ENCODE measurements at regions of chr13 and their contacts with region 1.

Region 1: DNA sequence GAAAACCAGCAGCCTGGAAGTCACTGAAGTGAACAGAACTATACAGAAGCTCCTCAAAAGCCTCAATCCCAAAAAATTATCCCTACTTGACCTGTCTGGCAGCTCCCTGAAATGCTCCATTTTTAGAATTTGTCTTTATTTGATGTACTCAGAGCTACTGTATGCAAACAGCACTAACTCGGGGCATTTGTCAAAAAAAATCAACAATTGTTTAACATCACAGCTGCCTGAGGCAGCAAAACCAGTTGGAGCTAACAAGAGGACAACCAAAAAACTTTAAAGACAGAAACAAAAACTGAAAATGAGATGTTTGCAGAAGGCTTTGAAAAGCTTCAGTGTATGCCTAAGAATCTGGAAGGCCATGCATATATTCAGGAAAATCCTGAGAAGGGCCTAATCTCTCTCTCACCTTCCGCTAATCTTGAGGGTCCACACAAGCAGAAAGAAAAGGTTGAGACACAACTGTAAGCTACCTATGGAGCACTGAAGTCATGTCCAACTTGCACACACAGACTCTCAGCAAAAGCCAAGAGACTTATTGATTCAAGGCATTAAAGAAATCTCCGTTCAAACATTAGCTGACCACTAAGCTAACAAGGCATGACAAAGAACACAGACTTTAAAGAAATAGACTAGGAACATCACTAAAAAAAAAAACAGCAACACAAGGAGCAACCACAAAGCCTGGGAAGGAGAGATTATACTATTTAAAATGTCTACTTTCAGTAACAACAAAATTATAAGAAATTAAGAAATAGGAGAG is 16.1 kb downstream of the VWA8 start:
- DNase-seq: peak; percentile 80
- ATAC-seq: peak; percentile 87
- H3K4me3 ChIP-seq: no peak overlapping the region
- H3K27ac ChIP-seq: peak overlapping the region; percentile 10
- H3K4me1 ChIP-seq: peaks cover 20% of the 10 kb centered on the region
- H3K27me3 ChIP-seq: no peaks in the 10 kb centered on the region; a peak in 1 of 5 replicates
- CTCF ChIP-seq: no peak
- EP300 ChIP-seq: peak in 1 of 2 experiments; percentile 71; a peak in 2 of 4 replicates
- POLR2A ChIP-seq: no peak
- RAD21 ChIP-seq: no peak

Region 2: DNA sequence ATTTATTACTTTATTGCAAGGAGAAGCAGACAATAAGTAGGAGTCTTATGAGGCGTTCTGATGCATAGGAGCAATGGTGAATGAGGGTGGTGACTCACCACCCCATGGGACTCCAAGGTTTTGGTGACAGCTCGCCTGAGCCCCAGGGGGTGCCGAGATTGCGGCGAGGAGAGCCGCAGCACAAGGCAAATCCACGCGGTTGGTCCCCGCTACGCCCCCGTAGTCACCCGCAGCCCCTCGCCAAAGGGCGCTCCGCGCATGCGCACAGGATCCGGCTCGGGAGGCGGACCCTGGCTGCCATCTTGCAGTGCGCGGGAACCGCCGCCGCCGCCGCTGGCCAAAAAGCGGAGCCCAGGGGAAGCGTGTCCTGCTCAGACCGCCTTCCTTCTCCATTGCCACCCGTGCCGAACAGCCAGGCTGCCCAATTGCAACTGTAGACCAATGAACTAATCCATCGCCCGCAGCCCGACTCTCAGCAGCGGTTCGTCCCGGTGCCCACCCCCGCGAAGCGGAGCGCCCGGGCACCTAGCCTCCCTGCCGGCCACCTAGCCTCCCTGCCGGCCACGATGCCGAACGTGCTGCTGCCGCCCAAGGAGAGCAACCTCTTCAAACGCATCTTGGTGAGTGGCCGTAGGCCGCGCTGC is 633.7 kb before region 1 on chr13 and contains the start of gene NAA16:
- CTCF ChIA-PET with region 1: no interaction called
- POLR2A ChIA-PET with region 1: no interaction called
- in situ Hi-C with region 1: no loop called
- intact Hi-C with region 1: no loop called
- DNase-seq: peak; percentile 72
- ATAC-seq: peak; percentile 88
- H3K4me3 ChIP-seq: peak within 1 kb of the TSS; percentile 94 to 99 (median 98)
- H3K27ac ChIP-seq: peak within 1 kb of the TSS; percentile 89
- H3K4me1 ChIP-seq: peaks cover 60% of the 10 kb centered on the region
- H3K27me3 ChIP-seq: no peaks in the 10 kb centered on the region; a peak in 1 of 5 replicates
- CTCF ChIP-seq: no peak
- EP300 ChIP-seq: no peak
- POLR2A ChIP-seq: peak; percentile 68 to 88
- RAD21 ChIP-seq: peak; percentile 48
- total RNA-seq, gene NAA16: 9.0 and 15.1 TPM in 2 replicates

Region 3: GRCh38 chr13:41955605-41956004 is 10.8 kb after region 1 on chr13:
- CTCF ChIA-PET with region 1: no interaction called
- POLR2A ChIA-PET with region 1: interaction called, 13 read pairs
- in situ Hi-C with region 1: no loop called
- intact Hi-C with region 1: loop called (anchors 1 kb)
- DNase-seq: no peak
- ATAC-seq: no peak
- H3K4me3 ChIP-seq: no peak overlapping the region
- H3K27ac ChIP-seq: no peak overlapping the region
- H3K4me1 ChIP-seq: peaks cover 55% of the 10 kb centered on the region
- H3K27me3 ChIP-seq: no peaks in the 10 kb centered on the region
- CTCF ChIP-seq: no peak
- EP300 ChIP-seq: no peak
- POLR2A ChIP-seq: no peak
- RAD21 ChIP-seq: no peak

Region 4: DNA sequence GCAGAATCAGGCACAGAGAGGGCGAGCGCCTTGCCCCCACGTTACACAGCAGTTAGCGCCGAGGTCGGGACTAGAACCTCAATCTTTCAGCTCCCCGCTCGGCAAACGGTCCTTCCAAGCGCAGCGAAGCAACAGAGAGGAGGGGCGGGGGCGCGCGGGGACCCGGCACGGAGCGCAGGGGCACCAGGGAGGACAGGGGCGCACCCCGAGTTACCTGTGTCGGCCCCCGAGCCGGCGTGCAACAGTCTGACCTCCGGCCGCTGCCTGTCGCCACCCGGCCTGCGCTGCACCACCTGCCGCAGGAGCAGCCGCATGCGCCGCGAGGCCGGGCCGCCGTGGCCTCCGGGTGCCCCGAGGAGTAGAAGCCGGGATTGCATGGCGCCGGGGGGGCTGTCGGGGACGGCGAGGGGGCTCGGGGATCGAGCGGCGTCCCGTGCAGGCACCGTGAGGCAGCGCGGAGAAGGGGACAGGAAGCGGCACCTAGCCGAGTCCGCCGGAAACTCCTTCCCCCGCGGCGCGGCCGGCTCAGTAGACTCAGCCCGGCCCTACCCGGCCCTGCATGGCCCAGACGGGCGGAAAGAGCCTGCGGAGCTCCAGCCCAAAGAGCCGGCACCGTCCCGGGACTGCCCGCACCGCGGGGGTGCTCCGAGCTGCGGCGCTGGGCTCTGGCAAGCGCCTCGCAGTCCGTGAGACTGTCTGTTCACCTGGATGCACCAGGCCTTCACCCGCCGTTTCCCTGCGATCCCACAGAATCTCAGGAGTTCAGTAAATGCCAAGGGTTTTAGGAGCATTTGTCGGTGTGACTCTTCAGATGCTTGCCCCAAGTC is 16.0 kb after region 1 on chr13 and contains the start of gene VWA8:
- CTCF ChIA-PET with region 1: no interaction called
- POLR2A ChIA-PET with region 1: interaction called, 13 read pairs
- in situ Hi-C with region 1: no loop called
- intact Hi-C with region 1: loop called (anchors 1 kb)
- DNase-seq: peak; percentile 59
- ATAC-seq: peak; percentile 96
- H3K4me3 ChIP-seq: peak within 1 kb of the TSS; percentile 78 to 96 (median 88)
- H3K27ac ChIP-seq: peak within 1 kb of the TSS; percentile 81
- H3K4me1 ChIP-seq: peaks cover 49% of the 10 kb centered on the region
- H3K27me3 ChIP-seq: peaks cover 0 to 3% of the 10 kb centered on the region in 2 experiments; a peak in 1 of 5 replicates
- CTCF ChIP-seq: no peak
- EP300 ChIP-seq: no peak
- POLR2A ChIP-seq: peak; percentile 85 to 88
- RAD21 ChIP-seq: no peak
- total RNA-seq, gene VWA8: 16.0 and 17.3 TPM in 2 replicates